GM18951 (cell line): ENCODE measurements at regions of chr14 and their contacts with region 1.

Region 1: DNA sequence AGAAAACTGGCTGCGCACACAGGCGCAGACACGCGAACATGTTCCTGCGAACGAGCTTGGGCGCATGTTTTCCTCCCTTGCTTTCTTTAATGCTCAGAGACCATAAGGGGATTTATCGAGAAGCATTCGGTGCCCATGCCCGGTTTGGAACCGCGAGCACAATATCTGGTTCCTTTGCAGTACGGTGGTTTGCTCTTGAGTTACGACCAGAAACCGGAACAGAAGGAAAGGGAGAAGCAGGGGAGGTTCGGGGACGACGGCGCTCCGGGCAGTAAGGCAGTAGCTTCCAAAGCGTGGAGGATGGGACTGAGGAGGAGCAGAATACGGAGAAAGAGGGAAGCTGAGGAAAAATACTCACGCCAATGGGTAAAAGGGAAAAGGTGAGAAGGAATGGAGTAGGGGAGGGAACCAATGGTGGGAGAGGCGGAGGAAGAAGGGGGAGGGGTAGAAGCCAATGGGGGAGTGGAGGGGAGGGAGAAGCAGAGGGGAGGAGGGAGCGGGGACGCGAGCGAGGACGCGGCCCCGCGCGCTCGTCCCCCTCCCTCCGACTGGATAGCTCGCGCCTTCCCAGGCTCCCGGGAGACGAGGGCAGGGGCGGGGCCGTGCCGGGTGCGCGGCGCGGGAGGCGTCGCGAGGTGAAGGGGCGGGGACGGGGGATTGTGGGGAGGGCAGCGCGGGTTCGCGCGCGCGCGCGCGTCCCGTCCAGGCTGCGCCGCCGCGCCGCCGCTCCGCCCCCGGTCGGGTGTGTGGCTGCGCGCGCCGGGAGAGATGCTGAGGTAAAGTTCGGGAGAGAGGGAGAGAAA is 625 bp upstream of the ARHGAP5 start:
- POLR2A ChIP-seq: peak; percentile 52

Region 2: GRCh38 chr14:31895206-31895605 is 181.3 kb before region 1 on chr14:
- in situ Hi-C with region 1: no loop called
- POLR2A ChIP-seq: no peak

Region 3: GRCh38 chr14:32202998-32203882 is 126.8 kb after region 1 on chr14 and contains the start of gene RNU6-8:
- in situ Hi-C with region 1: loop called (anchors 10 kb)
- POLR2A ChIP-seq: peak; percentile 58

Region 4: GRCh38 chr14:32252030-32252670 is 175.7 kb after region 1 on chr14:
- in situ Hi-C with region 1: loop called (anchors 5 kb)
- POLR2A ChIP-seq: no peak